H1 (cell line): ENCODE measurements at regions of chr2 and their contacts with region 1.

Region 1: DNA sequence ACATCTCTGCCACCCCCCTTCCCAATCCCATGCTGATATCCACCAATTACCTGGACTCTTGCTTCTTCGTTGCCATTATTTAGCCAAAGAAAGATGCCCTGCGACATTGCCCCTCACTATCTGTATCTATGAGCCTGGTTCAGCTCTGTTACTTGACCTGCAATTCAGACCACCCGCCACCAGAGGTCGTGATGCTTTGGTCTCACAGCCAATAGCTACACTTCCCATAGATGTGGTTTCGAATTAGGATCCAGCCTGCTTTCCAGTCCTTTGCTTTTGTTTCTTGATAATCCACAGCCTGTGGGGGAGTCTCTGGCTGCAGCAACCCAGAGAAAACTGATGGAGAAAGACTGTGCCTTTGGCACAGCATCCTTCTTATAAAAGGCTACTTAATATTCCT is 239.4 kb downstream of the KLHL29 start:
- DNase-seq: peak in 1 of 2 experiments; percentile 84
- H3K4me3 ChIP-seq: no peak overlapping the region
- H3K27ac ChIP-seq: no peak overlapping the region
- H3K4me1 ChIP-seq: peaks cover 0 to 6% (median 0%) of the 10 kb centered on the region in 4 experiments; a peak in 1 of 7 replicates
- H3K27me3 ChIP-seq: no peaks in the 10 kb centered on the region; a peak in 1 of 7 replicates
- CTCF ChIP-seq: peak; percentile 50 to 87 (median 60)
- EP300 ChIP-seq: no peak
- POLR2A ChIP-seq: no peak
- RAD21 ChIP-seq: peak; percentile 38 to 61; a peak in 3 of 4 replicates

Region 2: GRCh38 chr2:23585273-23586170 is 38.9 kb before region 1 on chr2:
- CTCF ChIA-PET with region 1: interaction called, 12 read pairs
- POLR2A ChIA-PET with region 1: no interaction called
- DNase-seq: no peak
- H3K4me3 ChIP-seq: no peak overlapping the region
- H3K27ac ChIP-seq: no peak overlapping the region
- H3K4me1 ChIP-seq: peaks cover 0 to 3% (median 0%) of the 10 kb centered on the region in 4 experiments; a peak in 1 of 7 replicates
- H3K27me3 ChIP-seq: no peaks in the 10 kb centered on the region
- CTCF ChIP-seq: no peak
- EP300 ChIP-seq: no peak
- POLR2A ChIP-seq: no peak
- RAD21 ChIP-seq: no peak

Region 3: DNA sequence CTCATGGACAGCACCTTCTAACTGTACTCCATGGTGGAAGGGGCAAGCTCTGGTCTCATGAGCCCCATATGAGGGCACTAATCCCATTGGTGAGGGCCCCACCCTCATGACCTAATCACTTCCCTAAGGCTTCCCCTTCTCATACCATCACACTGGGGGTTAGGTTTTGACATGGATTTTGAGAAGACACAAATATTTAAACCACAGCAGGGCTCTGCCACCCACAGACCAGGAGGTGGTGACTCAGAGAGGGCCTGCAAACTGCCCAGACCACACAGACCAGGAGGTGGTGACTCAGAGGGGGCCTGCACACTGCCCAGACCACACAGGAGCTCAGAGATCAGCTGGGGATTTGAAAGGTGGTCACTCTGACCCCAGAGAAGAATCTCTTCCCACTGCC is 17.4 kb before region 1 on chr2:
- CTCF ChIA-PET with region 1: interaction called, 47 read pairs
- POLR2A ChIA-PET with region 1: interaction called, 3 read pairs
- DNase-seq: no peak
- H3K4me3 ChIP-seq: no peak overlapping the region
- H3K27ac ChIP-seq: no peak overlapping the region
- H3K4me1 ChIP-seq: peaks cover 2 to 13% (median 6%) of the 10 kb centered on the region in 4 experiments; a peak in 6 of 7 replicates
- H3K27me3 ChIP-seq: no peaks in the 10 kb centered on the region
- CTCF ChIP-seq: no peak
- EP300 ChIP-seq: no peak
- POLR2A ChIP-seq: no peak
- RAD21 ChIP-seq: no peak

Region 4: DNA sequence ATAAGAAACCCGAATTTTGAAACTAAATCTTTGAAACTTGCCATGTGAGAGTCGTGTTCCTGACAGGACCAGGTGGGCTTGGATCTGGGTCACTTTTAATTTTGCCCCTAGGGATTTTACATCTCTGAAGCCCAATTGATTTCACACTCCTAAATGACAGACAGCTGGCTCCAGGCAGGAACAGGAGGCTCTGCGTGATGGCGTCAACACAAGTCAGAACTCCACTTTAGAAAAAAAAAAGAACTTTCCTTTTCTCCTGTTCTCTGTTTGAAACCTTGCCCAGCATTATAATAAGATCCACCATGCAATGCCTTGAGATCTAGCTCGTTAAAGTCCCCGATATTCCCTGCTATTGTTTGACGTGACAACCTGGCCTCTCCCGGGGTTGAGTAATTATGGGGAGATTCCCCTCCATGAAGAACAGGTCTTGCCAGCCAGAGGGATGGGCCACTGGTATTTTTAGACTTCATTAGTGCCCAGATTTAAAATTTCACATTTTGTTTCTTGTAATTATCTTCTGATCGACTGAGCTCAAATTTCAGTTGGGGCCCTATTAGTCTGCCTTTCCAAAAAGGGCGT is 20.9 kb after region 1 on chr2:
- CTCF ChIA-PET with region 1: interaction called, 148 read pairs
- POLR2A ChIA-PET with region 1: no interaction called
- DNase-seq: no peak
- H3K4me3 ChIP-seq: no peak overlapping the region
- H3K27ac ChIP-seq: no peak overlapping the region
- H3K4me1 ChIP-seq: peaks cover 0 to 7% (median 0%) of the 10 kb centered on the region in 4 experiments; a peak in 1 of 7 replicates
- H3K27me3 ChIP-seq: no peaks in the 10 kb centered on the region
- CTCF ChIP-seq: no peak
- EP300 ChIP-seq: no peak
- POLR2A ChIP-seq: no peak
- RAD21 ChIP-seq: no peak

Region 5: DNA sequence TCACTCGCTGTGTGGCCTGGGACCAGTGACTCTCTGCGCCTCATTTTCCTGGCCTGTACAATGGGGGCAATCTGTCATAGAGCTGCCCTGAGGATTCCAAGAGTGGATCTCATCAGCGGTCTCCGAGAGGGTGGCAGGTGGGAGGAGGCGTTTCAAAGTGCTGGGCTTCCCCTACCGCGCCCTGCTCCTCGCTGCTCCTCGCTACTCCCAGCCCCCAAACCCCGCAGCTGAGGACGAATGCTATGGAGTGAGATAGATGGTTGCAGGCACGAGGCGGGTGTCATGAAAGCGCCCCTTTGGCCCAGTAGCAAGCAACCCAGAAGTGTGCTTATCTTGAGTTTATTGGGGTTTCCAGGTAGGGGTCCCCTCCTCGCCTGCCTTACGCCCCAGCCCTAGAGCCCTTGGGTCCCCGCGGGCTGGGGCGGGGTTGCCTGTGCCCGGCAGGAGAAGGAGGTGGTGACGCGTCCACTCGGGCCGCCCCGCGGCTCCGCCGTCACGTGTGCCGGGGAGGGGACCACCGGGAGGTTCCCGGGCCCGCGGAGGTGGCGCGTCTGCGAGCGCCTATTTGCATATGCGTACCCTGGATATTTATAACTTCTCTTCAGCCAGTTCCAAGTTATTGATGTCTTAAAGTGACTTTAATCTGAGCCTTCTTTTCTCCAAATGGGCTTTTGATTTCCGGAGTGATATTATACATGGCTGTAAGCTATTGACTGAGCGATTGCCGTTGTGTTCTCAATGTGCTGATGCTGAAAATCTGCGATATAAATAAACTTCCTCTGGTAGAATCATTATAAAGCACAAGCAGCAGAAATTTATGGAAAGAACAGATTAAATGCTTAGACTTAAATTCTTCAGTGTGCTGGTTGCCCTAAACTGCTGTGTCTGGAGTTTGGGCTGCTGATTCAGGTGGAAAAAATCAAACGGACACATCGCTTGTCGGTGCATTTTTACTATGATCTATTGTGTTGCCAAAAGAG is 38.9 kb after region 1 on chr2:
- CTCF ChIA-PET with region 1: interaction called, 35 read pairs
- POLR2A ChIA-PET with region 1: interaction called, 4 read pairs
- DNase-seq: no peak
- H3K4me3 ChIP-seq: peak overlapping the region in 2 of 4 experiments; percentile 14 to 48; a peak in 3 of 8 replicates
- H3K27ac ChIP-seq: no peak overlapping the region
- H3K4me1 ChIP-seq: peaks cover 0 to 3% (median 0%) of the 10 kb centered on the region in 4 experiments; a peak in 2 of 7 replicates
- H3K27me3 ChIP-seq: peaks cover 0 to 6% (median under 1%) of the 10 kb centered on the region in 4 experiments; a peak in 2 of 7 replicates
- CTCF ChIP-seq: no peak
- EP300 ChIP-seq: no peak
- POLR2A ChIP-seq: no peak
- RAD21 ChIP-seq: no peak

Region 6: GRCh38 chr2:23720705-23721453 is 96.5 kb after region 1 on chr2:
- CTCF ChIA-PET with region 1: interaction called, 12 read pairs
- POLR2A ChIA-PET with region 1: no interaction called
- DNase-seq: no peak
- H3K4me3 ChIP-seq: no peak overlapping the region
- H3K27ac ChIP-seq: no peak overlapping the region
- H3K4me1 ChIP-seq: no peaks in the 10 kb centered on the region
- H3K27me3 ChIP-seq: no peaks in the 10 kb centered on the region
- CTCF ChIP-seq: no peak
- EP300 ChIP-seq: no peak
- POLR2A ChIP-seq: no peak
- RAD21 ChIP-seq: no peak